Naive thymus-derived CD4-positive, alpha-beta T cell (primary cell): ENCODE measurements at regions of chr11 and their contacts with region 1.

Region 1: GRCh38 chr11:2298795-2299761 is 2.6 kb downstream of the C11orf21 start:
- DNase-seq: peak in 2 of 9 donors; percentile 30 to 32
- ATAC-seq: no peak
- H3K4me3 ChIP-seq: no peak overlapping the region
- H3K4me3 Mint-ChIP-seq: peak overlapping the region; percentile 52 to 98 (median 75)
- H3K27ac ChIP-seq: peak overlapping the region; percentile 58
- H3K27ac Mint-ChIP-seq: peak overlapping the region; percentile 63 to 91 (median 79)
- H3K4me1 ChIP-seq: peaks cover 30 to 44% of the 10 kb centered on the region in 2 donors
- H3K4me1 Mint-ChIP-seq: peaks cover 19 to 51% (median 38%) of the 10 kb centered on the region in 7 donors
- H3K27me3 ChIP-seq: no peaks in the 10 kb centered on the region
- H3K27me3 Mint-ChIP-seq: peaks cover 0 to 5% (median 0%) of the 10 kb centered on the region in 5 donors

Region 2: DNA sequence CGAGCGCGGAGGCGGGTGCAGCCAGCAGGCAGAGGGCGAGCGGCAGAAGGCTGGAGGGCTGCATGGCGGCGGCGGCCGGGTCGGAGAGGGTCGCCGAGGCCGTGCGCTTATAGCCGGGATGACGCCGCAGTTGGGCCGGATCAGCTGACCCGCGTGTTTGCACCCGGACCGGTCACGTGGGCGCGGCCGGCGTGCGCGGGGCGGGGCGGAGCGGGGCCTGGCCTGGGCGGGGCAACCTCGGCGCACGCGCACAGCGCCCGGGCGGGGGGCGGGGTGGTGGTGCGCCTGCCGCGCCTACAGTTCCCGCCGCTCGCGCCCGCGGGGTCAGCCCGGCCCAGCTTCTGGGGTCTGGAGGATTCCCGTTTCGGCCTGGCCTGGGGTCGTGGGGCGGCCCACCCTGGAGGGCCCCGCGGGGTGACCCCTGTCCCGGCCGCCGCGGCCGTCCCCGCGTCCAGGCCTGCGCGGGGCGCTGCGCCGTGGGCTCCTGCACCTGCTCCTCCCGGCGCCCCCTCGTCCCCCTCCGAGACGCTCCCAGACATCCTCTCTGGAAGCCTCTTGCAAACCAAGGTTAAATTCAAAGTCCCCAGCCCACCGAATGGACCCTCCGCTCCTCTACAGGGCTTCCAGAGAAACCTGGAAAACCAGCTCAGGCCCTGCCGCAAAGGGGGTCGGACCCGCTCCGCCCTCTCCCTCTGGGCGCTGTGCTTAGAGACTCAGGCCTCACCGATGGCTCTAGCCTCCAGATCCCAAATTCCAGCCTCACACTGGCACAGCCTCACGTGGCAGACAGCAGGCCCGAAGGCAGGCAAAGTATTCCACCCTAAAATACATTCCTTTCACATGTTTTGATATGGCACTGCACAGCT is 535.0 kb before region 1 on chr11 and contains the start of gene CTSD:
- CTCF ChIA-PET with region 1: no interaction called
- POLR2A ChIA-PET with region 1: no interaction called
- intact Hi-C with region 1: loop called in 1 of 2 experiments (anchors 5 kb)
- DNase-seq: peak; percentile 76 to 99 (median 83)
- ATAC-seq: peak; percentile 87
- H3K4me3 ChIP-seq: peak within 1 kb of the TSS; percentile 70
- H3K4me3 Mint-ChIP-seq: peak within 1 kb of the TSS; percentile 86 to 96 (median 91)
- H3K27ac ChIP-seq: peak within 1 kb of the TSS; percentile 82
- H3K27ac Mint-ChIP-seq: peak within 1 kb of the TSS; percentile 84 to 92 (median 87)
- H3K4me1 ChIP-seq: peaks cover 33 to 39% of the 10 kb centered on the region in 2 donors
- H3K4me1 Mint-ChIP-seq: peaks cover 14 to 41% (median 33%) of the 10 kb centered on the region in 7 donors
- H3K27me3 ChIP-seq: no peaks in the 10 kb centered on the region
- H3K27me3 Mint-ChIP-seq: no peaks in the 10 kb centered on the region
- total RNA-seq, gene CTSD: 103 to 378 (median 186) TPM

Region 3: DNA sequence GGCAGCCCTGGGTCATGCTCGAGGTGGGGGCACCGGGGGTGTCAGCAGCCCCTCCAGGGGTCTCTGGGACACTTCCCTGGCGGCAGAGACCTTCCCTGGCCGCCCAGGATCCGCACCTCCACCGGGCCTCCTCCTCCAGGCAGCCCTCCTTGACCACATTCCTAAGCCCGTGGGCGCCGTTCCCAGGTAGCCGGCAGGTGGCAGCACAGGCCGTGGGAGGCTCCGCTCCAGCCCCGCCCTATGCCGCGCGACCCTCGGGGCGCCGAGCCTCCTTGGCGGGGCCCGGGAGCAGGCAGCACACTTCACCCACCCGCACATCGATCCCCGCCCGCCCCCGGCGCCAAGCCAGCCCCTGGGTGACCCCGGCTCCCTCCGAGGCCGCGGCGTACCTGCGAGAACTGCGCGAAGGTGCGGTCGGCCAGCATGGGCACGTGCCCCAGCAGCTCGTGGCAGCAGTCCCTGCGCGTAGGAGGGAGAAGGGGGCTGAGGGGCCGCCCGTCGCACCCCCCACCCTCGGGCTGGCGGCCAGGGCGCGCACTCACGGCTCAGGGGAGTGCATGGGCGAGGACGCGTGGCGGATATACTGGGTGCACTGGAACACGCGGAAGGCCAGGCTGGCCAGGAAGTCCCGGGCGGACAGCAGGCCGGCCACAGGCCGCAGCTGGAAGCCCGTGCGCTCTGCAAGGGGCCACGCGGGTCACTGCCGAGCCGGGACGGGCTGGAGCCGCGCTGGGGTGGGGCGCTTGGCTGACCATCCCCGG is 132.8 kb before region 1 on chr11:
- CTCF ChIA-PET with region 1: no interaction called
- POLR2A ChIA-PET with region 1: no interaction called
- intact Hi-C with region 1: loop called in 1 of 2 experiments (anchors 1 kb)
- DNase-seq: peak in 7 of 9 donors; percentile 34 to 45 (median 38)
- ATAC-seq: peak; percentile 59
- H3K4me3 ChIP-seq: no peak overlapping the region
- H3K4me3 Mint-ChIP-seq: peak overlapping the region in 1 of 10 donors; percentile 19
- H3K27ac ChIP-seq: no peak overlapping the region
- H3K27ac Mint-ChIP-seq: no peak overlapping the region
- H3K4me1 ChIP-seq: no peaks in the 10 kb centered on the region
- H3K4me1 Mint-ChIP-seq: no peaks in the 10 kb centered on the region
- H3K27me3 ChIP-seq: no peaks in the 10 kb centered on the region
- H3K27me3 Mint-ChIP-seq: peaks cover 0 to 8% (median 0%) of the 10 kb centered on the region in 5 donors

Region 4: DNA sequence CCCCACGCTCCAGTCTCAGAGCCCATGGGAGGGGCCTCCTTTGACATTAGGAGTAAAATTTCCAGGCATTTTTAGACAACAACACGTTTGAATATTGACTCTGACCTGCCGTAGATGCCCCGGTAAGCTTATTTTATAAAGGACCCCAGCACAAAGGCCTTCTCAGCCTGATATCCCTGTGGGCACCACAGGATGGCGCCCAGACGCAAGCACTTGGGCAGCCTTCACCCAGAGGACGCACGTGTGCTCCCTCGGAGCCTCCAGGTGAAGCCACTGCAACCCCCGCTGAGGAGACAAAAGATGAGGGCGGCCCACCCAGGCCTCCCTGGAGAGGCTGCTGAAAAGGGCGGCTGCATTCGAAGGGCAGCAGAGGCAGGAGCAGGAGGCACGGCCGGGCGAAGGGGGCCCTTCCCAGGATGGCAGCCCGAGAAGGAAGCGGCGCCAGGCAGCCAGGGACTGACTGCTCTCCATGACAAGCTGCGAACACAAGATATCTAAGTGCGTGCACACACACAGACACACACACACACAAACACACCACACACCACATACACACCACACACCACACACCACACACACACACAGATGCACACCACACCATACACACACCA is 112.3 kb before region 1 on chr11:
- CTCF ChIA-PET with region 1: no interaction called
- POLR2A ChIA-PET with region 1: no interaction called
- intact Hi-C with region 1: loop called in 1 of 2 experiments (anchors 1 kb)
- DNase-seq: peak; percentile 30 to 63 (median 47)
- ATAC-seq: peak; percentile 81
- H3K4me3 ChIP-seq: no peak overlapping the region
- H3K4me3 Mint-ChIP-seq: no peak overlapping the region
- H3K27ac ChIP-seq: no peak overlapping the region
- H3K27ac Mint-ChIP-seq: no peak overlapping the region
- H3K4me1 ChIP-seq: peaks cover 3 to 4% of the 10 kb centered on the region in 2 donors
- H3K4me1 Mint-ChIP-seq: peaks cover 0 to 11% (median 4%) of the 10 kb centered on the region in 7 donors
- H3K27me3 ChIP-seq: no peaks in the 10 kb centered on the region
- H3K27me3 Mint-ChIP-seq: peaks cover 0 to 13% (median 8%) of the 10 kb centered on the region in 5 donors

Region 5: DNA sequence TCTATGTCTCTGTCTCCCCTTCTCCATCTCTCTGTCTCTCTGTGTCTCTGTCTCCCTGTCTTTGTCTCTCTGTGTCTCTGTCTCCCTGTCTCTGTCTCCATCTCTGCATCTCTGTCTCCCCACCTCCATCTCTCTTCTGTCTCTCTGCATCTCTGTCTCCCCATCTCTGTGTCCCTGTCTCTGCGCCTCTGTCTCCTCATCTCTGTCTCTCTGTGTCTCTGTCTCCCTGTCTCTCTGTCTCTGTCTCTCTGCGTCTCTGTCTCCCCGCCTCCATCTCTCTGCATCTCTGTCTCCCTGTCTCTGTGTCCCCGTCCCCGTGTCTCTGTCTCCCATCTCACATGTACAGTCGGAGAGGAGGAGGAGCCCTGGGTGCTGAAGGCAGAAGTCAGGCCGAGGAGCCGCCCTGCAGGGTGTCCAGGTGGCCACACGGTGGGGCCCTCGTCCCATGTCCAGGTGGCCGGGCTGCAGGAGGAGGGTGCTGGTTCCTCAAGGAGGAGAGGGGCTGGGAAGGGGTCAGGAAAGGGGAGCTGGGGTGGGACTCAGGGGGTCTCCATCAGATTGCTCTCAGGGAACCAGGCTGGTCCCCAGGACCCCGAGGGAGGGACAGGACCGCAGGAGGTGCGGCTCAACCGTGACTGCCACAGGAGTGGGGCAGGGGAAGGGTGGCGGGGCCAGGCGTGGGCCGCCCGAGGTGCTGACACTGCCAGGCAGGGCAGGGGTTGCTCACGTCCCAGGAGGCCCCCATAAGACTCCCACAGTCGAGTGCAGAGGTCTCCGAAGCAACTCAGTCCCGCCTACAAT is 101.9 kb before region 1 on chr11:
- CTCF ChIA-PET with region 1: interaction called, 4 read pairs
- POLR2A ChIA-PET with region 1: no interaction called
- intact Hi-C with region 1: loop called (anchors 1 kb)
- DNase-seq: peak; percentile 29 to 72 (median 62)
- ATAC-seq: peak; percentile 89
- H3K4me3 ChIP-seq: no peak overlapping the region
- H3K4me3 Mint-ChIP-seq: no peak overlapping the region
- H3K27ac ChIP-seq: no peak overlapping the region
- H3K27ac Mint-ChIP-seq: peak overlapping the region in 2 of 9 donors; percentile 46 to 69
- H3K4me1 ChIP-seq: peaks cover 0 to 4% of the 10 kb centered on the region in 2 donors
- H3K4me1 Mint-ChIP-seq: peaks cover 4 to 16% (median 12%) of the 10 kb centered on the region in 7 donors
- H3K27me3 ChIP-seq: no peaks in the 10 kb centered on the region
- H3K27me3 Mint-ChIP-seq: peaks cover 4 to 13% (median 12%) of the 10 kb centered on the region in 5 donors

Region 6: GRCh38 chr11:2377511-2378443 is 78.7 kb after region 1 on chr11:
- CTCF ChIA-PET with region 1: no interaction called
- POLR2A ChIA-PET with region 1: interaction called, 5 read pairs
- intact Hi-C with region 1: loop called in 1 of 2 experiments (anchors 1 kb)
- DNase-seq: peak in 8 of 9 donors; percentile 34 to 73 (median 52)
- ATAC-seq: peak; percentile 54
- H3K4me3 ChIP-seq: peak overlapping the region; percentile 83
- H3K4me3 Mint-ChIP-seq: peak overlapping the region; percentile 71 to 89 (median 84)
- H3K27ac ChIP-seq: peak overlapping the region; percentile 89
- H3K27ac Mint-ChIP-seq: peak overlapping the region in 7 of 9 donors; percentile 57 to 89 (median 81)
- H3K4me1 ChIP-seq: peaks cover 19 to 21% of the 10 kb centered on the region in 2 donors
- H3K4me1 Mint-ChIP-seq: peaks cover 13 to 44% (median 20%) of the 10 kb centered on the region in 7 donors
- H3K27me3 ChIP-seq: no peaks in the 10 kb centered on the region
- H3K27me3 Mint-ChIP-seq: peaks cover 0 to 7% (median 0%) of the 10 kb centered on the region in 5 donors

Region 7: DNA sequence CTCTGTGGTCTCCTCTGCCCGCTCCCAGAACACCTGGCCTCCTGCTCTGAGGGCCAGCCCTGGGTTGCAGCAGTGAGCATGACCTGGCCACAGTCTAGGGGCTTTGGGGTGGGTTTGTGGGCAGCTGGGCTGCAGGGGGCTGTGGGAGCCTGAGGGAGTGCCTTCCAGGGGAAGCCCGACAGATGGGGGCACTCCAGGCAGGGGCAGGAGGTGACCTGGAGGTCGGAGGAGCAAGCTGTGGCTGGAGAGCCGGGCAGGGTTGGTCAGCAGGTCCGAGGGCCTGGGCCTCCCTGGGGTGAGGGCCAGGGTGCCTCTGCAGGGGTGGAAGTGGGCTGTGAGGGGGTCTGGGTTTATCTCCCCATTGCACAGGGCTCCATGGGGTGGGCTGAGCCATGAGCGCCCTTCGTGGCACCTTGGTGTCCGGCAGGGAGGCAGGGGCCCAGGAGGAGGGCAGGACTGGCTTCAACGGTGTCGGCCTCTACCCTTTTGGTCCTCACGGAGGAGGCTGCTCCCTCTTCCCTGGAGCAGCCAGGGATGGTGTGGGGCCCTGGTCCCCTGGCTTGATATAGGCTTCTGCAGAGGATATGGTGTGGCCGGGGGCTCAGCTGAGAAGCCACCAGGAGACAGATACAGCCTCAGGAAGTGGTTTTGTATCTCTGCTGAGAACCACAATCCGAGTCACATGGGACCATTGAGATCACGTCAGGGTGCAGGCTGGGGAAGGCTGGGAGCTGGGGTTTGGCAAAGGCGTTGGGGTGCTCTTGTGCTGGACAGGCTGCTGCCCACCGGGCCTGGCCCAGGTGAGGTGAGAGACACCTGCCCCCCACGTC is 168.0 kb after region 1 on chr11:
- CTCF ChIA-PET with region 1: no interaction called
- POLR2A ChIA-PET with region 1: no interaction called
- intact Hi-C with region 1: loop called in 1 of 2 experiments (anchors 5 kb)
- DNase-seq: peak in 8 of 9 donors; percentile 53 to 80 (median 74)
- ATAC-seq: peak; percentile 95
- H3K4me3 ChIP-seq: peak overlapping the region; percentile 45
- H3K4me3 Mint-ChIP-seq: peak overlapping the region; percentile 75 to 93 (median 84)
- H3K27ac ChIP-seq: peak overlapping the region; percentile 52
- H3K27ac Mint-ChIP-seq: peak overlapping the region; percentile 57 to 96 (median 79)
- H3K4me1 ChIP-seq: peaks cover 17 to 57% of the 10 kb centered on the region in 2 donors
- H3K4me1 Mint-ChIP-seq: peaks cover 35 to 93% (median 65%) of the 10 kb centered on the region in 7 donors
- H3K27me3 ChIP-seq: no peaks in the 10 kb centered on the region
- H3K27me3 Mint-ChIP-seq: peaks cover 0 to 12% (median 0%) of the 10 kb centered on the region in 5 donors